Left ventricle myocardium inferior (tissue), 1 donor: ENCODE measurements at regions of chr20 and their contacts with region 1.

Region 1: GRCh38 chr20:21808863-21809664 is 103.6 kb downstream of the PAX1 start:
- DNase-seq: peak; percentile 40
- H3K4me3 ChIP-seq: no peak overlapping the region
- H3K27ac ChIP-seq: no peak overlapping the region
- H3K4me1 ChIP-seq: no peaks in the 10 kb centered on the region
- H3K27me3 ChIP-seq: peaks cover 32% of the 10 kb centered on the region
- CTCF ChIP-seq: peak; percentile 78

Region 2: DNA sequence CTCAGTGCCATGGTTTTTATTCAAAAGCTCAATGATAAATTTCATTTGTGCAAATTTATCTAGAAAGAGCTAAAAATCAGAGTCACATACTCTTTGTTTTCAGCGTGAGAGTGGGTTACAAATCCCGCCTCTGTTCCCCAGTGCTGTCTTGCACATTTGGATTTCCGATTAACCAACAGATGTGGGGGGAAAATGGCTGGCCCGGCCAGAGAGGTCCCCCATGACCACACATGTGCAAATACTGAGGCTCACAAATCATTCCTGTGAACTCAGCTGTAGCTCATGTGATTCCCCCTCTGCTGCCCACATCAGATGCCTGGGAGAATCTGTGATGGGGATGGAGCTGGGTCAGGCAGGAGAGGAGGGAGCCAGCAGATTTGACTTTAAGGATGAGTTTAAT is 65.1 kb after region 1 on chr20:
- intact Hi-C with region 1: no loop called
- DNase-seq: no peak
- H3K4me3 ChIP-seq: no peak overlapping the region
- H3K27ac ChIP-seq: no peak overlapping the region
- H3K4me1 ChIP-seq: no peaks in the 10 kb centered on the region
- H3K27me3 ChIP-seq: no peaks in the 10 kb centered on the region
- CTCF ChIP-seq: no peak

Region 3: GRCh38 chr20:21894579-21894978 is 85.5 kb after region 1 on chr20:
- intact Hi-C with region 1: no loop called
- DNase-seq: no peak
- H3K4me3 ChIP-seq: no peak overlapping the region
- H3K27ac ChIP-seq: no peak overlapping the region
- H3K4me1 ChIP-seq: no peaks in the 10 kb centered on the region
- H3K27me3 ChIP-seq: no peaks in the 10 kb centered on the region
- CTCF ChIP-seq: no peak

Region 4: DNA sequence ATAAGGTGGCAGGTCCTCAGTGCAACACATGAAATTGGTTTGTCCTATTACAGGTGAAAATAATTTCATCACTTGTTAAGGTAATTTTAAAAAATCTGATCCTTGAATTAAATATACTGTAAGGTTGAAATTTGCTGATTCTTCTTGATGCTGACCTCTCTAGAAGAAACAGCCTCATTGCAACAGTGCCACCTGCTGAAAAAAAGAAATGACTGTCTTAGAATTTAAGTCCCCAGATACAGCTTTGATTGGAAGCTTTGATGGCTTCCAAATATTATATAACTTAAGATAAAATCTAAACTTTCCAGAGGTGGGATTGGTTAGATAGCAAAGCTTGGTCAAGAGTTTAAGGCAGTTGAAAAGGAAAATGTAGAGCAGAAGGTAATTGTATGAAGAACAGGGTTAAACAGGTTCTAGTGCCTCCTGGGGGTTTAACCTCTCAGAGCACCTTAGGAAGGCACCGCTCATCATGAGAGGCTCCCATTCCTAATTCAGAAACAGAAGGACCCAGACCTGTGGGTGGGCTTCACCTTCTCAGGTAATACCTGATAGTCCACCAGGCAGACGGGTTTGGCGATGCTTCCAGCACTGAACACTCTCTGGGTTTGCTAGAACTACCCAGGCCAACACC is 297.4 kb after region 1 on chr20:
- intact Hi-C with region 1: loop called (anchors 10 kb)
- DNase-seq: no peak
- H3K4me3 ChIP-seq: no peak overlapping the region
- H3K27ac ChIP-seq: no peak overlapping the region
- H3K4me1 ChIP-seq: no peaks in the 10 kb centered on the region
- H3K27me3 ChIP-seq: peaks cover 6% of the 10 kb centered on the region
- CTCF ChIP-seq: peak; percentile 51